ENCODE measurements at regions of chr6 and their contacts with region 1.

Region 1: DNA sequence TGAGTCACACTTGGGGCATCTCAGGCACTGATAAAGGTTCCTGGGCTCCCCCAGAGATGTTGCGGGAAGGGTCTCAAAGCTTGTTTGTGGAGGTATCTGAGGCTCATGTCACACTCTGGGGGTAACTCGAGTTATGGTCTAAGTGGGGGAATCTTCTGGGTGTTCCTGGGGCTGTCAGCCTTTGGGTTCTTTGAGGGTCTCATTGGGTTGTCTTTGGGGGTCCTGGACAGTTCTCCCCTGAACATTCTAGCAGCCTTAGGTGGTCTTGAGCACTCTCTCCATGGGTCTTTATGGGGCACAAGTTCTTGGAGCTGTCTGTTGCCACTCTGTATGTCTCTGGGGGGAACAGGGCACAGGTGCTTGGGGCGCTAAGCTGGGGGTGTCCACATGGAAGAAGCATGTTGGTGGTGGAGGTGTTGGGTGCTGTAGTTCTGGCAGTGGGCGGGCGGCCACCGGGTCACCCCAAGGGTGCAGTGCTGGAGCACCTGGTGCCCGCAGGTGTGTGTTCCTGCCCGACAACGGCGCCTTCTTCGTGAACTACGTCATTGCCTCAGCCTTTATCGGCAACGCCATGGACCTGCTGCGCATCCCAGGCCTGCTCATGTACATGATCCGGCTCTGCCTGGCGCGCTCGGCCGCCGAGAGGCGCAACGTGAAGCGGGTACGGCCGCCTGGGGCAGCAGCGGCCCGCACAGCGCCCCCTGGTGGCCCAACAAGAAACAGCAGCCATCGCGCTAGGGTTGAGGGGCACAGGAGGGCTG is 7.1 kb upstream of the CAPN11 start:
- H3K4me3 Mint-ChIP-seq: no peak overlapping the region
- H3K27ac Mint-ChIP-seq: no peak overlapping the region
- H3K4me1 Mint-ChIP-seq: peaks cover 14% of the 10 kb centered on the region
- H3K27me3 Mint-ChIP-seq: no peaks in the 10 kb centered on the region

Region 2: DNA sequence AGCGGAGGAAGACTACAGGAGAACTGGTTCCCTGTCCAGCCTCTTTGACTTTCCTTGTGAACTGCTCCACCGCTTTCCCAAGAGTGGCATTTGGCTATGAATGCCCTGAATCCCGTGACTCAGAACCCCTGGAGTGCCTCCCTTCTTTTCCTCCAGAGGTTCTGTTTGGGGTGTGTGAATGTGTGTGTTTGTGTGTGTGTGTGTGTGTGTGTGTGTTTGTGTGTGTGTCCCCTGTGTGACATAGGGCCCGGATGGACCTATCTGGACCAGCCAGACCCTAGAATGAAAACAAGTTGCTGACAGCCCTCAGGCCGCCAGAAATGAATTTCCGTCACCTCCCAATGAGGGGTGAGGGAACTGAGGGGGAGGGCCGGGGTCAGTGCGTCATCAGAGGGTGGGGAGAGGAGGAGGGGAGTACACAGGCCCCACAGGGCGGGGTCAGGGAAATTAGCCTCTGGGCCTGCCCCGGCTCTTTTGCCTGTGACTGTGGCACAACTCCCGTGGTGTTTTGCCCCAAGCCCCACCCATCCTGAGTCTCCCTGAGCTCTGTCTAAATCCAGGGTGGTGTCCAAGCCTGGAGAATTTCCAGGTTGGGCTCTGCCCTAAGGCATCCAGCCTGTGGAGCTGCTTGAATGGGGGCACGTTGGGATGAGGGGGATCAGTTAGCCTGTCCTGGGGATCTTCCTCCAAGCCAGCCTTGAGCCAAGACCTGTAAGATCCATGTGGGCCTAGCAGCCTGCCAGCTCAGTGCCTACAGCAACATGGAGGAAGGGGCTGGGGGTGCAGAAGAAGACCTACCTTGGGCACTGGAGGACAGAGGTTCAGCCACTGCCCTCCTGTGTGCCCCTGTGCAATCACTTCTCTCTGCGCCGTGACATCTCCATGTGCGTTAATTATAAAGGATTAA is 448.7 kb before region 1 on chr6:
- intact Hi-C with region 1: no loop called
- H3K4me3 Mint-ChIP-seq: no peak overlapping the region
- H3K27ac Mint-ChIP-seq: peak overlapping the region; percentile 64
- H3K4me1 Mint-ChIP-seq: peaks cover 54% of the 10 kb centered on the region
- H3K27me3 Mint-ChIP-seq: peaks cover 75% of the 10 kb centered on the region

Region 3: GRCh38 chr6:44096612-44097011 is 54.9 kb before region 1 on chr6:
- intact Hi-C with region 1: loop called (anchors 1 kb)
- H3K4me3 Mint-ChIP-seq: no peak overlapping the region
- H3K27ac Mint-ChIP-seq: no peak overlapping the region
- H3K4me1 Mint-ChIP-seq: no peaks in the 10 kb centered on the region
- H3K27me3 Mint-ChIP-seq: no peaks in the 10 kb centered on the region

Measured in dendritic cell treated with granulocyte-macrophage colony-stimulating factor and Interleukin-4, amounts not matched to agents 40 ng/mL and 50 ng/mL, for 4 days (primary cell).